ENCODE measurements at regions of chr4 and their contacts with region 1.

Region 1: DNA sequence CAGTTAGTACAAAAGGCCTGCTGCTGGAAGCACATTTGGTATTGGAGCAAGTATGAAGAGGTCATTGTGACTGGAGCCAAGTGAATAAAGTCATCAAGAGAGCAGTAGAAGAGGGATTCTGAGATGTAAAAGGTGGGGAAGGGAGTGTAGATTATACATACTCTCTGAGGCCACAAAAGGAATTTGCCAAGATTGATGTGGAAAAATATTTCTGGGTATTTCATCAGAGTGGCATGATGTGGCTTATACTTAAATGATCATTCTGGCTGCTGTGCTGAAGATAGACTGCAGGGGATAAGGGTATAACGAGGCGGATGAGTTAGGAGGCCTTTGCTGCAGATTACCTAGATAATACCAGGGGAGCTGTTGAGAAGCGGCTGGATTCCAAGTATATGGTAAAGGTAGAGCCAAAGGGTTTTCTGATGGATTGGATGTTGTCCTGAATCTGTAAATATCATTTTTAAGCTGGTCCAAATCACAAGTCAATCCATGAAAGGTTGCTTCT is 231.8 kb upstream of the AGA start:
- DNase-seq: no peak

Region 2: GRCh38 chr4:176789955-176790354 is 884.1 kb before region 1 on chr4:
- intact Hi-C with region 1: no loop called
- DNase-seq: no peak

Region 3: GRCh38 chr4:177505171-177505615 is 168.8 kb before region 1 on chr4:
- intact Hi-C with region 1: no loop called
- DNase-seq: no peak

Region 4: GRCh38 chr4:177699365-177700213 is 25.6 kb after region 1 on chr4:
- intact Hi-C with region 1: loop called in 1 of 2 experiments (anchors 1 kb)
- DNase-seq: no peak

Measured in posterior vena cava (tissue), 2 donors.